ENCODE measurements at regions of chr12 and their contacts with region 1.

Region 1: GRCh38 chr12:109844983-109845823 is 12.0 kb upstream of the TRPV4 start:
- DNase-seq: peak; percentile 89
- ATAC-seq: peak; percentile 99
- H3K4me3 ChIP-seq: peak overlapping the region in 3 of 5 experiments; percentile 17 to 38 (median 25)
- H3K4me3 Mint-ChIP-seq: peak overlapping the region; percentile 44
- H3K27ac ChIP-seq: no peak overlapping the region
- H3K27ac Mint-ChIP-seq: no peak overlapping the region
- H3K4me1 ChIP-seq: peaks cover 3 to 10% of the 10 kb centered on the region in 2 donors
- H3K4me1 Mint-ChIP-seq: peaks cover 10% of the 10 kb centered on the region
- H3K27me3 ChIP-seq: no peaks in the 10 kb centered on the region
- H3K27me3 Mint-ChIP-seq: no peaks in the 10 kb centered on the region
- CTCF ChIP-seq: peak; percentile 99

Region 2: GRCh38 chr12:109597795-109598427 is 247.3 kb before region 1 on chr12:
- CTCF ChIA-PET with region 1: interaction called, 18 read pairs
- POLR2A ChIA-PET with region 1: no interaction called
- intact Hi-C with region 1: loop called (anchors 5 kb)
- DNase-seq: peak; percentile 69
- ATAC-seq: peak; percentile 78
- H3K4me3 ChIP-seq: no peak overlapping the region
- H3K4me3 Mint-ChIP-seq: no peak overlapping the region
- H3K27ac ChIP-seq: no peak overlapping the region
- H3K27ac Mint-ChIP-seq: no peak overlapping the region
- H3K4me1 ChIP-seq: peaks cover 4 to 6% of the 10 kb centered on the region in 2 donors
- H3K4me1 Mint-ChIP-seq: peaks cover 11% of the 10 kb centered on the region
- H3K27me3 ChIP-seq: no peaks in the 10 kb centered on the region
- H3K27me3 Mint-ChIP-seq: no peaks in the 10 kb centered on the region
- CTCF ChIP-seq: peak; percentile 89

Region 3: DNA sequence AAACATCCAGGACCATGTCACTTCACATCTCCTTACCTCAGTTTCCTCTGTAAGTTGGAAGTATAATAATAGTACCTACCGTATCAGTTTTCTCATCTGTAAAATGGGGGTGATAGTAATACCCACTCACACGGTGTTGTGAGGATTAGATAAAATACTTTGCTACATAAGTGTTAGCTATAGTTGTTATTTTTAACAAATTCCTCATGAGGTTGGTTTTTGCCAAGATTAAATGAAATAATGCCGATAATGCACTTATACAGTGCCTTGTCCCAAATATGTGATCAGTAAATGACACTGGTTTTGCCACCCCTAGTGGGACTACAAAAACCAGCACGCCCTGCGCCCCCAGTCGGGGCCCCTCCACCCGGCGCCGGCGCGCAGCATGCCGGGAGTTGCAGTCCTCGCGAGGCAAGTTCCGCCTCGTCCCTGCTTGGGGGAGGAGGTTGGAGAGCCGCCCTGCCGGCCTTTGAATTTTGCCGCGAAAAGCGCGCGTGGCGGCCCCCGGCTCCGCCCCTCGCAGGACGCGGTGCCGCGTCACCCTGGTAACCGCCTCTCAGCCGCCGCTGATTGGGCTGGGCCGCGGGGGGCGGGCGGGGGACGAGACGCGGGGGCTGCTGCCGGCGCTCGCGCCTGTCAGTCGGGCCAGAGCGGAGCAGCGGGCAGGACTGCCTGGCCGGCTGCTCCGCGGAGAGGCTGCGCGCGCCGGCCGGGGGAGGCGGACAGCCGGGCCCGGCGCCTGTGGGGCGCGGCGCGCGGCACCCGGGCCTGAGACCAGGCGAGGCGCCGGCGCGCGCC is 131.8 kb before region 1 on chr12 and contains the start of gene FAM222A:
- CTCF ChIA-PET with region 1: no interaction called
- POLR2A ChIA-PET with region 1: no interaction called
- intact Hi-C with region 1: loop called (anchors 10 kb)
- DNase-seq: peak; percentile 99
- ATAC-seq: peak; percentile 84
- H3K4me3 ChIP-seq: peak within 1 kb of the TSS in 4 of 5 experiments; percentile 53 to 80 (median 64)
- H3K4me3 Mint-ChIP-seq: peak within 1 kb of the TSS; percentile 85
- H3K27ac ChIP-seq: peak within 1 kb of the TSS in 1 of 2 donors; percentile 52
- H3K27ac Mint-ChIP-seq: peak within 1 kb of the TSS; percentile 82
- H3K4me1 ChIP-seq: peaks cover 10 to 11% of the 10 kb centered on the region in 2 donors
- H3K4me1 Mint-ChIP-seq: peaks cover 11% of the 10 kb centered on the region
- H3K27me3 ChIP-seq: peaks cover 0 to 59% (median 23%) of the 10 kb centered on the region in 4 experiments
- H3K27me3 Mint-ChIP-seq: peaks cover 37% of the 10 kb centered on the region
- CTCF ChIP-seq: no peak
- total RNA-seq, gene FAM222A: 4.6 and 4.7 TPM in 2 replicates

Region 4: GRCh38 chr12:109804820-109805761 is 40.1 kb before region 1 on chr12:
- CTCF ChIA-PET with region 1: interaction called, 41 read pairs
- POLR2A ChIA-PET with region 1: no interaction called
- intact Hi-C with region 1: loop called (anchors 1 kb)
- DNase-seq: peak; percentile 78
- ATAC-seq: peak; percentile 92
- H3K4me3 ChIP-seq: no peak overlapping the region
- H3K4me3 Mint-ChIP-seq: no peak overlapping the region
- H3K27ac ChIP-seq: no peak overlapping the region
- H3K27ac Mint-ChIP-seq: no peak overlapping the region
- H3K4me1 ChIP-seq: no peaks in the 10 kb centered on the region
- H3K4me1 Mint-ChIP-seq: peaks cover 1% of the 10 kb centered on the region
- H3K27me3 ChIP-seq: no peaks in the 10 kb centered on the region
- H3K27me3 Mint-ChIP-seq: no peaks in the 10 kb centered on the region
- CTCF ChIP-seq: peak; percentile 96

Region 5: GRCh38 chr12:109833307-109834189 is 11.7 kb before region 1 on chr12 and contains the start of gene TRPV4:
- CTCF ChIA-PET with region 1: interaction called, 17 read pairs
- POLR2A ChIA-PET with region 1: no interaction called
- intact Hi-C with region 1: no loop called
- DNase-seq: no peak
- ATAC-seq: no peak
- H3K4me3 ChIP-seq: no peak within 1 kb of the TSS
- H3K4me3 Mint-ChIP-seq: no peak within 1 kb of the TSS
- H3K27ac ChIP-seq: no peak within 1 kb of the TSS
- H3K27ac Mint-ChIP-seq: no peak within 1 kb of the TSS
- H3K4me1 ChIP-seq: no peaks in the 10 kb centered on the region
- H3K4me1 Mint-ChIP-seq: peaks cover 4% of the 10 kb centered on the region
- H3K27me3 ChIP-seq: peaks cover 0 to 40% (median 10%) of the 10 kb centered on the region in 4 experiments
- H3K27me3 Mint-ChIP-seq: peaks cover 24% of the 10 kb centered on the region
- CTCF ChIP-seq: no peak
- total RNA-seq, gene TRPV4: not detected in 2 replicates

Region 6: GRCh38 chr12:109858764-109859163 is 13.6 kb after region 1 on chr12:
- CTCF ChIA-PET with region 1: interaction called, 14 read pairs
- POLR2A ChIA-PET with region 1: no interaction called
- intact Hi-C with region 1: no loop called
- DNase-seq: no peak
- ATAC-seq: no peak
- H3K4me3 ChIP-seq: no peak overlapping the region
- H3K4me3 Mint-ChIP-seq: no peak overlapping the region
- H3K27ac ChIP-seq: no peak overlapping the region
- H3K27ac Mint-ChIP-seq: no peak overlapping the region
- H3K4me1 ChIP-seq: no peaks in the 10 kb centered on the region
- H3K4me1 Mint-ChIP-seq: peaks cover 2% of the 10 kb centered on the region
- H3K27me3 ChIP-seq: no peaks in the 10 kb centered on the region
- H3K27me3 Mint-ChIP-seq: no peaks in the 10 kb centered on the region
- CTCF ChIP-seq: no peak

Region 7: DNA sequence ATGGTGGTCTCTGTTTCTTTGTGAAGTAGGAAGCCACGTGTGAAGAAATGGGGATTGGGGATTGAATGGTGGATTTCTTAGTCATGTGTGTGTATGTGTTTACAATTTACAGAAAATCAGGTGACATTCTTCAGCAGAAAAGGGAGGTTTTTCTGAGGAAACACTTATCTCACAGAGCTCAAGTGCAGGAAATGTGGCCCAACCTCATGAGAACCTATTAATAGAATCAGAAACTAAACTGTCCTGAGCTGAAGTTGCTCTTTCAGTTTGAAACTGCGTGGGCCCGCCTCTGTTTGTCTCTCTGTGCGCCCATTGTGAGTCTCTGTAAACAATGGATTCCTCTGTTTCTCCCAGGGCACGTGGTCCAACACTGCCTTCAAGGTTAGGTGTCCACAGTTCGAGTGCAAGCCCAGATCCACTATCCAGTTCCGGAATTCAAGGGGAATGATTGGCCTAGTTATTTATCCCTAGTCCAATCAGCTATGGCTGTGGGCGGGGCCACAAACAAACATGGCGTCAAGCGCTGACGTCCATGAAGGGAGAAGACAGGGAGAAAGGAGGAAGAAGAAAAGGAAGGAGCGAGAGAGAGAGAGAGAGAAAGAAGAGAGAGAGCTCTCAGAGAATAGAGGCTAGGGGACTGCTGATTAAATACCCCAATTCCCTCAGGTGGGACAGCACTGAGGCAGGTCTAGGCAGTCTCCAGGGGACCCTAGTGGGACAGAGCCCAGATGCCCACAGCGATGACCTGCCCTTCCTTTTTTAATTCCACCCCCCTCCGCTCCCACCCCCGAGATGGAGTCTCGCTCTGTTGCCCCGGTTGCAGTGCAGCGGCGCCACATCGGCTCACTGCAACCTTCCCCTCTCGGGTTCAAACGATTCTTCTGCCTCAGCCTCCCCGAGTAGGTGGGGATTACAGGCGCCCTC is 234.5 kb after region 1 on chr12:
- CTCF ChIA-PET with region 1: no interaction called
- POLR2A ChIA-PET with region 1: no interaction called
- intact Hi-C with region 1: no loop called
- DNase-seq: peak; percentile 88
- ATAC-seq: peak; percentile 95
- H3K4me3 ChIP-seq: peak overlapping the region; percentile 47 to 60 (median 48)
- H3K4me3 Mint-ChIP-seq: peak overlapping the region; percentile 87
- H3K27ac ChIP-seq: peak overlapping the region; percentile 87 to 90
- H3K27ac Mint-ChIP-seq: peak overlapping the region; percentile 98
- H3K4me1 ChIP-seq: peaks cover 19 to 23% of the 10 kb centered on the region in 2 donors
- H3K4me1 Mint-ChIP-seq: peaks cover 18% of the 10 kb centered on the region
- H3K27me3 ChIP-seq: no peaks in the 10 kb centered on the region
- H3K27me3 Mint-ChIP-seq: no peaks in the 10 kb centered on the region
- CTCF ChIP-seq: no peak